CD8-positive, alpha-beta T cell (primary cell): ENCODE measurements at regions of chr2 and their contacts with region 1.

Region 1: GRCh38 chr2:237923481-237924163 is 43.2 kb upstream of the UBE2F start:
- DNase-seq: peak; percentile 71 to 89 (median 75)
- ATAC-seq: peak; percentile 100
- H3K4me3 ChIP-seq: peak overlapping the region; percentile 46 to 48
- H3K4me3 Mint-ChIP-seq: peak overlapping the region; percentile 29
- H3K27ac ChIP-seq: no peak overlapping the region
- H3K27ac Mint-ChIP-seq: no peak overlapping the region
- H3K4me1 ChIP-seq: peaks cover 5% of the 10 kb centered on the region
- H3K4me1 Mint-ChIP-seq: peaks cover 10% of the 10 kb centered on the region
- H3K27me3 ChIP-seq: no peaks in the 10 kb centered on the region
- H3K27me3 Mint-ChIP-seq: no peaks in the 10 kb centered on the region
- CTCF ChIP-seq: peak; percentile 98

Region 2: DNA sequence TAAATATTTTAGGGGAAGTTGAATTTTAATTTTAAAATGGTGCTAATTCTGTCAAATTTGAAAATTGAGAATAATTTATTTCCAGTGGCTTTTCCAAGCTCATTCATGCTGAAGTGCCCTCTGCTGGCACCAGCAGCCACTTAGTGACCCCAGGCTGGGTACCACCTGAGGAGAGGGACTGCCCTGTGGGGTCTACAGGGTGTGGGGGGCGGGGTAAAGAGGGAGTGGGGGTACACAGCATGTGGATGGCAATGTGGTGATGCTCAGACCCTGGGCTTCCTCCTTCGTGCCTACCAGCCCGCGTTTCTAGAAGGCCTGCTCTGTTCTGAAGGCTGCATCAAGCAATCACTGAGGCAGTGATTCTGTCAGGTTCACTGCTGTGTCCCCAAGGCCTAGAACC is 92.1 kb after region 1 on chr2:
- CTCF ChIA-PET with region 1: interaction called, 3 read pairs
- POLR2A ChIA-PET with region 1: no interaction called
- intact Hi-C with region 1: loop called in 1 of 2 experiments (anchors 1 kb)
- DNase-seq: peak in 1 of 9 experiments; percentile 22
- ATAC-seq: no peak
- H3K4me3 ChIP-seq: no peak overlapping the region
- H3K4me3 Mint-ChIP-seq: no peak overlapping the region
- H3K27ac ChIP-seq: no peak overlapping the region
- H3K27ac Mint-ChIP-seq: no peak overlapping the region
- H3K4me1 ChIP-seq: no peaks in the 10 kb centered on the region
- H3K4me1 Mint-ChIP-seq: peaks cover 8% of the 10 kb centered on the region
- H3K27me3 ChIP-seq: no peaks in the 10 kb centered on the region
- H3K27me3 Mint-ChIP-seq: no peaks in the 10 kb centered on the region
- CTCF ChIP-seq: no peak

Region 3: GRCh38 chr2:238158527-238159070 is 235.0 kb after region 1 on chr2 and contains the start of gene ERFE:
- CTCF ChIA-PET with region 1: no interaction called
- POLR2A ChIA-PET with region 1: no interaction called
- intact Hi-C with region 1: loop called in 1 of 2 experiments (anchors 10 kb)
- DNase-seq: peak in 7 of 9 experiments; percentile 19 to 67 (median 37)
- ATAC-seq: peak; percentile 83
- H3K4me3 ChIP-seq: peak within 1 kb of the TSS in 1 of 2 experiments; percentile 19
- H3K4me3 Mint-ChIP-seq: peak within 1 kb of the TSS; percentile 66
- H3K27ac ChIP-seq: no peak within 1 kb of the TSS
- H3K27ac Mint-ChIP-seq: no peak within 1 kb of the TSS
- H3K4me1 ChIP-seq: peaks cover 9% of the 10 kb centered on the region
- H3K4me1 Mint-ChIP-seq: peaks cover 12% of the 10 kb centered on the region
- H3K27me3 ChIP-seq: peaks cover 11% of the 10 kb centered on the region in 2 experiments
- H3K27me3 Mint-ChIP-seq: peaks cover 18% of the 10 kb centered on the region
- CTCF ChIP-seq: peak; percentile 23
- total RNA-seq, gene ERFE: not detected